ENCODE measurements at regions of chr9 and their contacts with region 1.

Region 1: GRCh38 chr9:84315278-84315877 is 25.2 kb downstream of the SLC28A3 start:
- DNase-seq: peak; percentile 9 to 49 (median 39)
- ATAC-seq: peak; percentile 73
- H3K4me3 ChIP-seq: no peak overlapping the region
- H3K4me3 Mint-ChIP-seq: peak overlapping the region in 1 of 10 donors; percentile 13
- H3K27ac ChIP-seq: no peak overlapping the region
- H3K27ac Mint-ChIP-seq: no peak overlapping the region
- H3K4me1 ChIP-seq: no peaks in the 10 kb centered on the region
- H3K4me1 Mint-ChIP-seq: peaks cover 0 to 35% (median 0%) of the 10 kb centered on the region in 7 donors
- H3K27me3 ChIP-seq: no peaks in the 10 kb centered on the region
- H3K27me3 Mint-ChIP-seq: no peaks in the 10 kb centered on the region

Region 2: DNA sequence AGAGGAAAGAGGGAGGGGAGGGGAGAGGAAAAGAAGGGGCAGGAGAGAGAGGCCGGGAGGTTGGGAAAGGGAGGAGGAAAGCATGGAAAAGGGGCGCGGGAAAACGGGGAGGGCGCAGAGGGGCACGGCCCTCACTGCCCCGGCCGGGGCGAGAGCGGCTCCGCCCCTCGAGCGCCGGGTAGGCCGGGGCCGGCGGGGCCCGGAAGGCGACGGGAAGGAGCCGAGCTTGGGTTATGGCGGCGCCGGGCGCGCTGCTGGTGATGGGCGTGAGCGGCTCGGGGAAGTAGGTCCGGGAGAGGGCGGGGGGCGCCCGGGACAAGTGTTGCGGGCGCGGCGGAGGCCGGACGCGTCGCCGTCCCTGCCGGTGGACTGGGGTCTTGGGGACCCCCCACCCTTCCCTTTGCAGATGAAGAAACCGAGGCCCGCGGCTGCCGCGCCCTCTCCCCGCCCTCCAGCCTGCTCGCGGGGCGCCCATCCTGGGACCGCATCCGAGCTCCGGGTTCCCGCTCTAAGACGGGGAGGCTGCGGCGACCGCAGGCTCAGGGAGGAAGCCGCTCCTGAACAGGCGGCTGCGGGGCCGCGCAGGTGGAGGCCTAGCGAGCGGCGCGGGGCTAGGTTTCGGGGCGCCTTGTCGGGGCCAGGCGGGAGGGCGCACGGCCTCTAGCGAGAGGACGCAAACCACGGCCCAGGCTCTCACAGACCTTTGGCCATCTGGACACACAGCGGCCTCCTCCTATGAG is 692.3 kb before region 1 on chr9 and contains the start of gene IDNK:
- CTCF ChIA-PET with region 1: no interaction called
- POLR2A ChIA-PET with region 1: no interaction called
- intact Hi-C with region 1: loop called (anchors 5 to 10 kb)
- DNase-seq: peak; percentile 52 to 76 (median 64)
- ATAC-seq: peak; percentile 90
- H3K4me3 ChIP-seq: peak within 1 kb of the TSS; percentile 59
- H3K4me3 Mint-ChIP-seq: peak within 1 kb of the TSS; percentile 90 to 96 (median 96)
- H3K27ac ChIP-seq: peak within 1 kb of the TSS; percentile 83
- H3K27ac Mint-ChIP-seq: peak within 1 kb of the TSS; percentile 74 to 98 (median 96)
- H3K4me1 ChIP-seq: peaks cover 8 to 11% of the 10 kb centered on the region in 2 donors
- H3K4me1 Mint-ChIP-seq: peaks cover 21 to 51% (median 30%) of the 10 kb centered on the region in 7 donors
- H3K27me3 ChIP-seq: no peaks in the 10 kb centered on the region
- H3K27me3 Mint-ChIP-seq: peaks cover 0 to 14% (median 0%) of the 10 kb centered on the region in 5 donors
- total RNA-seq, gene IDNK: 8.5 to 11.3 (median 10.9) TPM

Region 3: GRCh38 chr9:83937911-83938323 is 377.5 kb before region 1 on chr9:
- CTCF ChIA-PET with region 1: interaction called, 4 read pairs
- POLR2A ChIA-PET with region 1: no interaction called
- intact Hi-C with region 1: loop called (anchors 1 kb)
- DNase-seq: peak in 7 of 9 donors; percentile 44 to 74 (median 66)
- ATAC-seq: peak; percentile 84
- H3K4me3 ChIP-seq: no peak overlapping the region
- H3K4me3 Mint-ChIP-seq: no peak overlapping the region
- H3K27ac ChIP-seq: no peak overlapping the region
- H3K27ac Mint-ChIP-seq: no peak overlapping the region
- H3K4me1 ChIP-seq: no peaks in the 10 kb centered on the region
- H3K4me1 Mint-ChIP-seq: peaks cover 0 to 19% (median 0%) of the 10 kb centered on the region in 7 donors
- H3K27me3 ChIP-seq: no peaks in the 10 kb centered on the region
- H3K27me3 Mint-ChIP-seq: no peaks in the 10 kb centered on the region

Region 4: DNA sequence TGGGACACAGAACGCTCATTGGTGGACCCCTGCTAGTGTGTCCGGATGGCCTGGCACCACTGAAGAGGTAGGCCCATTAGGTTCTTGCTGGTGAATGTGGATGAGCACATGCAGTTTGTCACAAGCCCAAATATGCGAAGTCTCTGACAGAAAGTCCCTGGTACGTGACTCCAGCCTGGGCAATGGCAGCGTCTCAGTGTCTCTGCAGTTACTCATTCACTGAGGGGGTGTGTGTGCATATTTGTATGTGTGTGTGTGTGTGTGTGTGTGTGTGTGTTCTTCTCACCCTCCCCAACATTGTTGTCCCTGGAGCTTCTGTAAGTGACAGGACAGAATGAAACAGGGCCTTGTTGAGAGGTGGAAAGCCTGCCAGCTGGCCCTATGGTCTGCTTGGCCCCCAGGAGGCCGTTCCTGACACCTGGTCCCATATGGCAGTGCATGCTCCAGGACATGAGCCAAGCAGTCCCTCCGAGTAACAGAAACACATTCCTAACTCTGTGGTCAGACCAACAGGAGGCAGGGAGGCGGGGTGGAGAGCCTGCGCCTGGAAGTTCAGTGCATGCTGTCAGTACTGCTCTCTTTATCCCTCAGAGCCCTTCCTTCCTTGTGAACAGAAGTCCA is 144.7 kb before region 1 on chr9:
- CTCF ChIA-PET with region 1: no interaction called
- POLR2A ChIA-PET with region 1: no interaction called
- intact Hi-C with region 1: loop called (anchors 1 kb)
- DNase-seq: no peak
- ATAC-seq: no peak
- H3K4me3 ChIP-seq: no peak overlapping the region
- H3K4me3 Mint-ChIP-seq: no peak overlapping the region
- H3K27ac ChIP-seq: no peak overlapping the region
- H3K27ac Mint-ChIP-seq: no peak overlapping the region
- H3K4me1 ChIP-seq: no peaks in the 10 kb centered on the region
- H3K4me1 Mint-ChIP-seq: peaks cover 0 to 5% (median 0%) of the 10 kb centered on the region in 7 donors
- H3K27me3 ChIP-seq: no peaks in the 10 kb centered on the region
- H3K27me3 Mint-ChIP-seq: peaks cover 0 to 8% (median 5%) of the 10 kb centered on the region in 5 donors

Region 5: DNA sequence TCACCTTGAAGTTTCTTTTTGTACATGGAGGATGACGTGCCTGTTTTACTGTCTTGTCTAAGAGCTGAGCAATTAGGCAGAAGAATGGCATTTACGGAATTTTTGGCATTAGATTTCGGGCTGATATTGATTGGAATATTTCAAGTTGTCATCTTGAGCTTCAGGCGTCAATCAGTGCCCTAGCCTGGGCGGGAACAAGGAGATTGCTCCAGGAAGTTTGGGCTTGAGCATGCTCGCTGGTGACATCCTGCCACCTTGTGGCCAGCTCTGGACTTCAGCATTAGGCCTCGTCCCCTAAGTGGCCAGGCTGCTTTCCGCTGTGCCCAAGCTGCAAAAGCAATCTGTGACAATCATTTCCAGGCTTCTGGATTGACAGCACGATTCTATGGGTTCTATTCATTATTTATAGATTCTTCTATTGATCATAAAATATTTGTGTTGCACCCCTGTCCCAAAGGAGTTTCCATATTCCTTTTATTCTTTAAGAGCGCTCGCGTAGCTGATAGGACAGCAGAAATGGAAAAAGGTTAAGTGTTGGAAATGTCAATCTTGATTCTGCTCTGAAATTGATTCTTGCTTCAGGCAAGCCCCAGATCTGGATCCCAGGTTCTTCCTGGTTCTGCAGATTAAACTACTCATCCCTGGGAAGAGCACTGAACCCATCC is 54.2 kb before region 1 on chr9:
- CTCF ChIA-PET with region 1: interaction called, 3 read pairs
- POLR2A ChIA-PET with region 1: interaction called, 3 read pairs
- intact Hi-C with region 1: loop called (anchors 1 kb)
- DNase-seq: peak; percentile 7 to 46 (median 22)
- ATAC-seq: peak; percentile 77
- H3K4me3 ChIP-seq: no peak overlapping the region
- H3K4me3 Mint-ChIP-seq: peak overlapping the region in 5 of 10 donors; percentile 4 to 68 (median 26)
- H3K27ac ChIP-seq: no peak overlapping the region
- H3K27ac Mint-ChIP-seq: no peak overlapping the region
- H3K4me1 ChIP-seq: no peaks in the 10 kb centered on the region
- H3K4me1 Mint-ChIP-seq: peaks cover 0 to 14% (median 4%) of the 10 kb centered on the region in 7 donors
- H3K27me3 ChIP-seq: no peaks in the 10 kb centered on the region
- H3K27me3 Mint-ChIP-seq: peaks cover 0 to 17% (median 0%) of the 10 kb centered on the region in 5 donors

Region 6: DNA sequence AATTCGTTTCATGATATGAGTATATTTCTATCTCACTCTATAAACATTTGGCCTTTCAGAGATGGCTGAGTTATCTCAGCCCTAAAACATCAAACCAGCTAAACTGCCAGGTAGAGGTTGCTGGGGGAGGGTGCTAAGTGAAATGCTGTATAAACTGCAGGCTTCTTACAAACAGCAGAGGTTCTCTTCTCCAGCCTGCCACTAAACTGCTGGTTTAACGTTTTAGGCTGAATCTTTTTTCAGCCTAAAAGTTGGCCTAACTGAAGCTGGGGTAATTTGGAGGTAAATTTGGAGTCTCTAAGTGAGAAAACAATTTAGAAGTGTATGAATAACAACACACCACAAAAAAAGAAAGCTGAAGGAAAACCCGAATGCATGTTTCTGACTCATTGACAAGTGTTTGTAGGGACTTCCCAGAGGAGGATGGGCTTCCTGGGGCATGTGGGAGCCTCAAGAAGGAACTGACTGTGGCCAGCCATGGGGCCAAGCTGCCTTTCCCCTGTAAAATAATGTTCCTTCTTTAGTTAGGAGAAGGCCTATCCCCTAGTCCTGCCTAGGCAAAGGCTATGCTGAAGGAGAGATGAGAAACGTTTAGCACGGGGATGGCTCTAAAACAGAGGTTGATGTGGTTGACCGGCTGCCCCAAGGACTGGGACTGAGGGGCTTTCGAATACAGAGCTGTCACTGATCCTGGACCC is 19.1 kb before region 1 on chr9:
- CTCF ChIA-PET with region 1: interaction called, 3 read pairs
- POLR2A ChIA-PET with region 1: no interaction called
- intact Hi-C with region 1: loop called (anchors 1 kb)
- DNase-seq: peak in 2 of 9 donors; percentile 9 to 61
- ATAC-seq: peak; percentile 79
- H3K4me3 ChIP-seq: no peak overlapping the region
- H3K4me3 Mint-ChIP-seq: peak overlapping the region in 6 of 10 donors; percentile 5 to 71 (median 44)
- H3K27ac ChIP-seq: peak overlapping the region; percentile 6
- H3K27ac Mint-ChIP-seq: peak overlapping the region; percentile 54 to 100 (median 79)
- H3K4me1 ChIP-seq: peaks cover 8 to 32% of the 10 kb centered on the region in 2 donors
- H3K4me1 Mint-ChIP-seq: peaks cover 19 to 74% (median 48%) of the 10 kb centered on the region in 7 donors
- H3K27me3 ChIP-seq: no peaks in the 10 kb centered on the region
- H3K27me3 Mint-ChIP-seq: no peaks in the 10 kb centered on the region

Measured in naive thymus-derived CD4-positive, alpha-beta T cell (primary cell).